Right ventricle myocardium inferior (tissue), 1 donor: ENCODE measurements at regions of chrX and their contacts with region 1.

Region 1: DNA sequence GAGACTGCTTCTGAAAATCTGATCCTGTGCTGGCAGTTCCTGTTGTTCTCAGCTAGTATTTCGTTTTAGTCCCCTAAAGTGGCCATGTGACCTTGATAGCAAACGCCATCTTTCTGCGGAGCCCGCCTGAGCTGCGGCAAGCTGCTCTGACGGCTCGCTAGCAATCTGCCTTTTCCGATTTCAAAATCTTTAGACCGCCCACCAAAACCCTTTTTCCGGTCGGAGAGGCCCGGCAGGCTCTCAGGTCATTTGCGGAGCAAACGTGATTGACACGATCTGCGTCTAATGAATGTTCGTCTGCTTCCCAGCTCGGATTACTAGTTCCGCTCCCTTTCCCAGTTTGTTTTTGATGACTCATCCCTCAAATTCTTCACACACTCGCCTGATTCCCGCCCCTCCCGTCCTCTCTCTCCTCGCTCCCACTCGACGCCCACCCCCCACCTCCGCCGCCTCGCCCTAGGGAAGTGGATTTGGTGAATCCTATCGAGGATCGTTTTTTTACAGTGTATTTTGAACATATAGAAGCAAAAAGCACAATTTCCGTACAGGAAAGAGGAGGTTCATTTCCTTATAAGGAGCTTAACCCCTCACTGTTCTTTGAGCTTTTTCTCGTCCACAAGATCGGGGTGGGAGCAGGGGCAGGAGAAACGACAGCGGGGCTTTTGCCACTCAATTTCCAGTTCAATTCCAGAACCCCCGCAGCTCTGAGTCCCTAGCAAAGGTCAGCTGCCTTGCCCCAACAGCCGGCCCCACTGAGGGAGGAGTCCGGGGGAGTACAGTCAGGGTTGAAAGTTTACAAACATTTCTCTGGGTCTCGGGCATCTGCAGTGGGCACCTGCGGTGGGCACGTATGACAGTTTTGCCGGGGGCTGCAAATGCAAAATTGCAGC is 37.5 kb downstream of the NLGN3 start:
- DNase-seq: peak; percentile 84
- ATAC-seq: peak; percentile 98

Region 2: DNA sequence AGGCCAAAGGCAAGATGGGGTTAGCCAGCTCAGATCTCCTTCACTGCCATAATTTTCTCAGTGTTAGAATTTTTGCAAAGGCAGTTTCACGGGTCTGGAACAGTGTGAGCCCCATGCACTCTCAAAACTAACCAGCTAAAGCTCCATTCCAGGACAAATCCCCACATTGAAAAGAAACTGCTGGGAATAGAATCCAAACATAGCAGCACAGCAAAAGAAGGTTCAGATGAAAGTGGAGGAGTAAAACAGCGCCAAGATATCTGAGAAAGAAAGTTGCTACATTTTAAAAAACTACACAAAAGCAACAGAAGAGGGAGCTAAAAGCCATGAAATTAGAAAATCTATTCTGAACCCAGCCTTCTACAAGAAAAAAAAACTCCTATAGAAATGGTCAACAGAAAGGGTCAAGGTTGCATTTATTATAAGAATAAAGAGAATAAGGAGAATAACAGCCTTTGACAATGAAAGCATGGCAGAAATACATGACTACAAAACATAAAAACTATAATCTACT is 211.6 kb before region 1 on chrX:
- intact Hi-C with region 1: loop called (anchors 2 kb)
- DNase-seq: no peak
- ATAC-seq: no peak

Region 3: GRCh38 chrX:71068049-71068763 is 113.9 kb before region 1 on chrX and contains the start of gene SNX12:
- intact Hi-C with region 1: loop called (anchors 1 kb)
- DNase-seq: peak; percentile 92
- ATAC-seq: peak; percentile 100
- total RNA-seq, gene SNX12: 49.5 TPM

Region 4: DNA sequence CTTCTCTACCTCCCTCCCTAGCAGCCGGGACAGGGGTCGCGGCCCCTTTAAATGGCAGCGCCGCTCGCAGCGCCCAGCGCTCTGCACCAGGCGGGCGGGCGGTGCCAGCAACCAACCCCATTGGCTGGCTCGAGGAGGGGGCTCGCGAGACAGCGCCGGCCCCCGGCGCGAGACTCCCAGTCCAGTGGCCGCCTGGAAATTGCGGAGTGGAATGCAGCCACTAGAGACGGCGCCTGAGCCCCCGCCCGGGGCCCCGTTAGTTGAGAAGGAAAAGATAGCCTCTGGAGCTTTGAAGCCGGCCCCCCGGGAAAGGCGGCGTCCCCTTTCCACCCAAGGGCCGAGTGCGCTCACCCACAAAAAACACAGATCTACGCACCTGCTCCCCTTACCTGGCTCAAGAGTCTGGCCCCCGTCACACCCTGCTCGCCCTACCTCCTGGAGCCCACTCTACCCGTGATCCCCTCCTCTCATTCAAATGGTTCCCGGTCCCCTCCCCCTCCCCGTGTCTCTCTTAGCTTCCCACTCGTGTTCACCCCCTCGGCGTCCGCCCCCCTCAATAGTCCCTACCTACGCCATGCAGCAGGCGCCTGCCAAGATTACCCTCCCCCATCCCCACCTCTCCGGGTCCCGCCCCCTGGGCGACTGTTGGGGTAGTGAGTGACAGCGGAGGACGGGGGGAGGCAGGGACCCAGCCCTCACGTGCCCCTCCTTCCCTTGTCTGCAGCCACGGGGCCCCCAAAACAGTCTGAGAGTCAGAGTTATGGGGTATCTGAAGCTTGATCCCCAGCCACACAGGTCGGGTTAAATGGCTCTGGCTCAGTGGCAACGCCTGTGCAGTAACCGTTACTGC is 72.2 kb after region 1 on chrX and contains the start of gene ZMYM3:
- intact Hi-C with region 1: loop called (anchors 5 kb)
- DNase-seq: peak; percentile 92
- ATAC-seq: peak; percentile 97
- total RNA-seq, gene ZMYM3: 14.2 TPM

Region 5: GRCh38 chrX:71365876-71366673 is 183.9 kb after region 1 on chrX and contains the start of gene TAF1:
- intact Hi-C with region 1: loop called (anchors 5 kb)
- DNase-seq: peak; percentile 97
- ATAC-seq: peak; percentile 98
- total RNA-seq, gene TAF1: 14.6 TPM